PC-9 (cell line): ENCODE measurements at regions of chr7 and their contacts with region 1.

Region 1: DNA sequence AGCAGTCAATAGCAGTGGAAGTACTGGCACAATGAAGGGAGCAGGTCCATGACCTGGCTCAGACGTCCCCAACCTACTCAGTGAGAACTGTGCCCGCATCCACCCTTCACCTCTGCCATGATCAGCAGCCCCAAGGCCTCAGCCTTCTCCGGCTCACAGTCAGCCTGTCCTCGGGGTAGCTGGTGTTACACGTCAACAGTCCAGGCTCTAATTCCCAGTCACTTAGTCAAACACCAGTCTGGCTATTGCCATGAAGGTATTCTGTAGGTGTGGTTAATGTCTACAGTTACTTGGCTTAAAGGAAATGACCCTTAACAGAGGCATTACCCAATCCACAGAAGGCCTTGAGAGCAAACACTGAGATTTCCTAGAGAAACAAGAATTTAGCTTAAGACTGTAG is 49.1 kb downstream of the GRB10 start:
- DNase-seq: peak; percentile 69 to 99
- H3K4me3 ChIP-seq: no peak overlapping the region
- H3K27ac ChIP-seq: peak overlapping the region; percentile 29
- H3K4me1 ChIP-seq: peaks cover 29% of the 10 kb centered on the region
- H3K27me3 ChIP-seq: no peaks in the 10 kb centered on the region
- CTCF ChIP-seq: no peak

Region 2: DNA sequence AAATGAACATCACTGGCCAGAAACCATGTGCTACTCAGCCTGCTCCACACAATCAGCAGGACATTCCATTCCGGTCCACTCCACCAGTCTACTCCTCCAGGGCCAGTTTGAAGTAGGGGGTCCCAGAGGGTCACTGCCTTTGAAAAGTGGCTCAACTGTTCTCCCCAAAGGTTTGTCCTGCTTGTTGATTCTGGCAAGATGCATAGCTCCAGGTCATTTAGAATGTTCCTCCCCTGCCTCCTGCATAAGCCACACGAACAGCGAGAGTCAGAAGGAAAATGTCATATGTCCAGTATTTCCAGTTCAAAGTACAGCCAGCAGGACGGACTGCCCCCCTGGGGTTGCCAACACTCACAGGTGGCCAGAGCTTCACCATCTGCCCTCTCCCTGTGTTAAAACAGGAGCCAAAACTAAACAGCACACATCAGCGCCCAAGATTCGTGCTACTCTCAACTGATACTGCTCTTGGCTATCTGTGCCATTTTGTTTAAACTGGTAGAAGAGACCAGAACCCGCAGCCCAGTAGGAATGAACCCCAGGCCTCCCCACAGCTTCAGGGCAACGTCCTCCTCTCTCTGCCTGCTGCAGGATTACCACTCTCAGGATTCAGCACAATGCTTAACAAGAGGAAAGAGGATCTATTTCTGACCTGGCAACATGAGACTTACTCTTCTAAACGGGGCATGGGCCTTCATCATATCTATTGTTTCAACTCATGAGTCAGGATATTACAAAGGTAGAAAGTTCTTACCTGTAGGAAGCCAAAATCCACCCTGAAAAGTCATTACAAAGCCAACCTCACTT is 37.8 kb after region 1 on chr7:
- CTCF ChIA-PET with region 1: no interaction called
- POLR2A ChIA-PET with region 1: no interaction called
- intact Hi-C with region 1: loop called (anchors 2 kb)
- DNase-seq: peak; percentile 61 to 92
- H3K4me3 ChIP-seq: no peak overlapping the region
- H3K27ac ChIP-seq: no peak overlapping the region
- H3K4me1 ChIP-seq: peaks cover 29% of the 10 kb centered on the region
- H3K27me3 ChIP-seq: no peaks in the 10 kb centered on the region
- CTCF ChIP-seq: no peak

Region 3: GRCh38 chr7:51075681-51076580 is 342.4 kb after region 1 on chr7:
- CTCF ChIA-PET with region 1: no interaction called
- POLR2A ChIA-PET with region 1: interaction called, 10 read pairs
- intact Hi-C with region 1: no loop called
- DNase-seq: no peak
- H3K4me3 ChIP-seq: no peak overlapping the region
- H3K27ac ChIP-seq: no peak overlapping the region
- H3K4me1 ChIP-seq: no peaks in the 10 kb centered on the region
- H3K27me3 ChIP-seq: no peaks in the 10 kb centered on the region
- CTCF ChIP-seq: no peak